GM12878 (cell line): ENCODE measurements at regions of chr7 and their contacts with region 1.

Region 1: DNA sequence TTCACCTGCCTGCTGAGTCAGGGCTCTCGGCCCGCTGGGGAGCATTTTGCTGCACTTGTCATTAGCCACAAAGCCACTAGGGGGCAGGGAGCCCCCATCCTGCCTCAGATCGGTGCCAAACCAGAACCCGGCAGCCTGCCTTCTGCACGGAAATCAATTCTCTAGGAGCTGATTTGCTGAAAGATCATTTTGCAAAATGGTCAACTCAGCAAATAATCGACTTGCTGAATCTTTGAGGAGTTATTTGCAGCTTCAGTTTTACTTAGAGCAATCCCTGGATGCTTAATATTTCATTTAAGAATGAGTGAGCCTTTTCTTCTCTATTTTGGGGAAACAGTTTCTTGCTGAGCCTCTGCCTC is 1.7 kb upstream of the GIMAP8 start:
- DNase-seq: no peak
- ATAC-seq: peak; percentile 75
- H3K4me3 ChIP-seq: no peak overlapping the region
- H3K27ac ChIP-seq: peak overlapping the region; percentile 87
- H3K4me1 ChIP-seq: peaks cover 34% of the 10 kb centered on the region
- H3K27me3 ChIP-seq: no peaks in the 10 kb centered on the region
- CTCF ChIP-seq: peak; percentile 95 to 99 (median 98); a peak in 5 of 6 replicates
- EP300 ChIP-seq: no peak
- POLR2A ChIP-seq: no peak
- RAD21 ChIP-seq: peak; percentile 97

Region 2: DNA sequence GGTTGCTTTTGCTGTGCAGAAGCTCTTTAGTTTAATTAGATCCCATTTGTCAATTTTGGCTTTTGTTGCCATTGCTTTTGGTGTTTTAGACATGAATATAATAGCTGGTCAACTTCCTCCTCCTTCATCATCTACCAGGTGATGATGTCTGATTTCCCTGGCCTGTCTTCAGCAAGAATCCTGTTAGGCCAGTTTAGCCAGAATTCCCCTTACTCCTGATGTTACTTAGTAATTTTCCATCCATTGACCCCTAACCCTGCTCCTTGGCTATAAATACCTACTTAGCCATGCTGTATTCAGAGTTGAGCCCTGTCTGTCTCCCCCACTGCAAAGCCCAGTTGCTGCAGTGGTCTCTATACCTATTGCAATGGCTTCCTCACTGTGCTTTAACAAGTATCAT is 1079.3 kb before region 1 on chr7:
- CTCF ChIA-PET with region 1: no interaction called
- POLR2A ChIA-PET with region 1: no interaction called
- RAD21 ChIA-PET with region 1: no interaction called
- SMC1A ChIA-PET with region 1: no interaction called
- in situ Hi-C with region 1: no loop called
- intact Hi-C with region 1: no loop called
- DNase-seq: no peak
- ATAC-seq: no peak
- H3K4me3 ChIP-seq: no peak overlapping the region
- H3K27ac ChIP-seq: no peak overlapping the region
- H3K4me1 ChIP-seq: no peaks in the 10 kb centered on the region
- H3K27me3 ChIP-seq: no peaks in the 10 kb centered on the region
- CTCF ChIP-seq: no peak
- EP300 ChIP-seq: no peak
- POLR2A ChIP-seq: no peak
- RAD21 ChIP-seq: no peak

Region 3: GRCh38 chr7:150620617-150621371 is 172.0 kb after region 1 on chr7:
- CTCF ChIA-PET with region 1: no interaction called
- POLR2A ChIA-PET with region 1: no interaction called
- RAD21 ChIA-PET with region 1: interaction called, 4 read pairs
- SMC1A ChIA-PET with region 1: interaction called, 3 read pairs
- in situ Hi-C with region 1: no loop called
- intact Hi-C with region 1: loop called (anchors 5 kb)
- DNase-seq: no peak
- ATAC-seq: peak; percentile 45
- H3K4me3 ChIP-seq: no peak overlapping the region; the same call in 1 of the 2 replicates
- H3K27ac ChIP-seq: peak overlapping the region; percentile 67
- H3K4me1 ChIP-seq: peaks cover 17% of the 10 kb centered on the region
- H3K27me3 ChIP-seq: no peaks in the 10 kb centered on the region
- CTCF ChIP-seq: no peak
- EP300 ChIP-seq: no peak
- POLR2A ChIP-seq: no peak
- RAD21 ChIP-seq: no peak

Region 4: GRCh38 chr7:150685219-150686029 is 236.7 kb after region 1 on chr7 and contains the start of gene GIMAP2:
- CTCF ChIA-PET with region 1: interaction called, 5 read pairs
- POLR2A ChIA-PET with region 1: no interaction called
- RAD21 ChIA-PET with region 1: interaction called, 5 read pairs
- SMC1A ChIA-PET with region 1: interaction called, 7 read pairs
- in situ Hi-C with region 1: no loop called
- intact Hi-C with region 1: loop called (anchors 5 kb)
- DNase-seq: no peak
- ATAC-seq: peak; percentile 96
- H3K4me3 ChIP-seq: peak within 1 kb of the TSS; percentile 89
- H3K27ac ChIP-seq: peak within 1 kb of the TSS; percentile 91
- H3K4me1 ChIP-seq: peaks cover 7% of the 10 kb centered on the region; the same call in 1 of the 2 replicates
- H3K27me3 ChIP-seq: no peaks in the 10 kb centered on the region
- CTCF ChIP-seq: peak in 1 of 3 experiments; percentile 7; a peak in 1 of 6 replicates
- EP300 ChIP-seq: no peak
- POLR2A ChIP-seq: 0 out of 2 replicates have a peak, but pooled peaks have one; percentile 35
- RAD21 ChIP-seq: peak; percentile 41; the same call in 1 of the 2 replicates
- polyA plus RNA-seq, gene GIMAP2: 47.5 to 60.0 TPM

Region 5: DNA sequence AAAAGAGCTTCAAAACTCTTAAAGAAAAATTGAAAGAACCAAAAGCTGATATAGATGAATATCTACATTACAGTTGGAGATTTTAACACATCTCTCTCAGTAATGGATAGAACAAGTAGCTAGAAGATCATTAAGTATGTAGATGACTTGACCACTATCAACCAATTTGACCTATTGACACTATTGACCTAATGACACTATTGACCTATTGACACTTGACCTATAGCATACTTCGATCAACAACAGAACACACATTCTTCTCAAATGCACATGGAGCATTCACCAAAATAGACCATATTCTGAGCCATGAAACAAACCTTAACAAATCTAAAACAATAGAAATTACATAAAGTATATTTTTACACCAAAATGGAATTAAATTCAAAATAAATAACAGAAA is 310.7 kb after region 1 on chr7:
- CTCF ChIA-PET with region 1: interaction called, 112 read pairs
- POLR2A ChIA-PET with region 1: interaction called, 5 read pairs
- RAD21 ChIA-PET with region 1: interaction called, 75 read pairs
- SMC1A ChIA-PET with region 1: interaction called, 115 read pairs
- in situ Hi-C with region 1: loop called (anchors 5 kb)
- intact Hi-C with region 1: loop called (anchors 1 kb)
- DNase-seq: no peak
- ATAC-seq: no peak
- H3K4me3 ChIP-seq: no peak overlapping the region
- H3K27ac ChIP-seq: no peak overlapping the region
- H3K4me1 ChIP-seq: peaks cover 16% of the 10 kb centered on the region
- H3K27me3 ChIP-seq: no peaks in the 10 kb centered on the region
- CTCF ChIP-seq: no peak
- EP300 ChIP-seq: no peak
- POLR2A ChIP-seq: no peak
- RAD21 ChIP-seq: no peak

Region 6: DNA sequence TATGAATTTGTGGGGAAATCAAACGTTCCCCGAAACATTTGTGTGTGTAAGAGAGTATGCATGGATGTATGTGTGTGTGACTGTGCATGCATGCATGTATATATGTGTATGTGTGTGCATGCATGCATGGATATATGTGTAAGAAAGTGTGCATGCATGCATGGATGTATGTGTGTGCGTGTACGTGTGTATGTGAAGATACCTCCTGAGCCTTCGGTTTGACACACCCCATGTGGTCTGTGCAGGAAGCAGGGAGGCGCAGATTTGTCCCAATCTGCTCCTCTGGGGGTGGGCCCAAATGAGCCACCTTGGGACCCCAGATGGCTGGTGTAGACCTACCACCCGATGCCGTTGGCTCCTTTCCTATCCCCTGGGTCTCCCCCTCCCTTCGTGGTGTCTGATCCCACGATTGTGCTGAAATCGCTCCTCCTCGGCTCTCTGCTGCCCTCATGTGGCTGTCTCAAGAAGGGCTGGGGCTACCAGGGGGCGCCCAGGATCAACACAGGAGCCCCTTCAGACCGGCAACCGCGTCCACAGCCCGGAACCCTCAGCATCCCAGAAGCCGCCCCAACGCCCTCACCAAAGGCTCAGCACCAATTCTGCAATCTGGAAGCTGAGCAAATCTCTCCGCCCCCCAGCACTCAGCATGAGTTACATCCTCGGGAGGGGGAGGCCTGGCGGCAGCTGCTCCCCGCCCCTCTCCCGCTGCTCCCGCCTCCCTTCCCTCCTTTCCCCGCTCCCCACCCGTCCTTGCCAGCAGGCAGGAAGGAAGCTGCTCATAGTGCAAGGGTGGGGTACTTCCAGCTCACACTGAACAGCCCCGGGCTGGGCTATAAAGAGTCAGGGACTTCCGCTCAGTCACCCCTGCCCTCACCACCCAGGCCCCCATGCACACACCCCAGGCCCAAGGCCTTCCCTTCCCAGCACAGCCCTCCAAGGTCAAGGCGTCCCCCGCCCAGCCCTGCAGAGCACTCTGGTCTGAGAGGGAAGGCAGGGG is 539.8 kb after region 1 on chr7:
- CTCF ChIA-PET with region 1: no interaction called
- POLR2A ChIA-PET with region 1: no interaction called
- RAD21 ChIA-PET with region 1: no interaction called
- SMC1A ChIA-PET with region 1: no interaction called
- in situ Hi-C with region 1: no loop called
- intact Hi-C with region 1: loop called (anchors 5 kb)
- DNase-seq: no peak
- ATAC-seq: peak; percentile 84
- H3K4me3 ChIP-seq: no peak overlapping the region
- H3K27ac ChIP-seq: no peak overlapping the region
- H3K4me1 ChIP-seq: no peaks in the 10 kb centered on the region; the same call in 1 of the 2 replicates
- H3K27me3 ChIP-seq: peaks cover 0 to 3% of the 10 kb centered on the region in 2 experiments; a peak in 2 of 4 replicates
- CTCF ChIP-seq: peak; percentile 65 to 79 (median 72)
- EP300 ChIP-seq: no peak
- POLR2A ChIP-seq: no peak
- RAD21 ChIP-seq: peak; percentile 73

Region 7: DNA sequence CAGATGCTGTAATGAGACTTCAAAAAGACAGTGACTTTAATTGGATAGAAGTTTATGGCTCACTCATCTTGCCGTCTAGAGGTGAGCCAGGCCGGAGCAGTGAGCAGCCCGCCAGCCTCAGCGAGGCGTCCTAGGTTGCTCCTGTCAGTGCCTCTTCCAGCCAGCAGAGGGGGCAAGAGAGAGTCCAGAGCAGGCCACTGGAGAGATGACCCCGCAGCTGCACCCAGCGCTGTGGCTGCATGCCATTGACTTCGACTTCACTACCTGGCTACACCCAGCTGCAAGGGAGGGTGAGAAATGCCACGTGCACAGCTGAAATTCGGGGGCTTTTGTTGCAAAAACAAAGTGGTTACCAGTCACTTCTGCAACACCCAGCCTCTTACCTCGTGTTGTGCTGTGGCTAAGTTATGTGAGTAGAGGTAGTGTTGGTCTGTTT is 919.4 kb after region 1 on chr7:
- CTCF ChIA-PET with region 1: no interaction called
- POLR2A ChIA-PET with region 1: no interaction called
- RAD21 ChIA-PET with region 1: no interaction called
- SMC1A ChIA-PET with region 1: no interaction called
- in situ Hi-C with region 1: no loop called
- intact Hi-C with region 1: no loop called
- DNase-seq: no peak
- ATAC-seq: peak; percentile 100
- H3K4me3 ChIP-seq: no peak overlapping the region
- H3K27ac ChIP-seq: no peak overlapping the region
- H3K4me1 ChIP-seq: no peaks in the 10 kb centered on the region
- H3K27me3 ChIP-seq: no peaks in the 10 kb centered on the region
- CTCF ChIP-seq: peak; percentile 86 to 95 (median 88)
- EP300 ChIP-seq: no peak
- POLR2A ChIP-seq: no peak
- RAD21 ChIP-seq: peak; percentile 70